ENCODE measurements at regions of chr2 and their contacts with region 1.

Region 1: DNA sequence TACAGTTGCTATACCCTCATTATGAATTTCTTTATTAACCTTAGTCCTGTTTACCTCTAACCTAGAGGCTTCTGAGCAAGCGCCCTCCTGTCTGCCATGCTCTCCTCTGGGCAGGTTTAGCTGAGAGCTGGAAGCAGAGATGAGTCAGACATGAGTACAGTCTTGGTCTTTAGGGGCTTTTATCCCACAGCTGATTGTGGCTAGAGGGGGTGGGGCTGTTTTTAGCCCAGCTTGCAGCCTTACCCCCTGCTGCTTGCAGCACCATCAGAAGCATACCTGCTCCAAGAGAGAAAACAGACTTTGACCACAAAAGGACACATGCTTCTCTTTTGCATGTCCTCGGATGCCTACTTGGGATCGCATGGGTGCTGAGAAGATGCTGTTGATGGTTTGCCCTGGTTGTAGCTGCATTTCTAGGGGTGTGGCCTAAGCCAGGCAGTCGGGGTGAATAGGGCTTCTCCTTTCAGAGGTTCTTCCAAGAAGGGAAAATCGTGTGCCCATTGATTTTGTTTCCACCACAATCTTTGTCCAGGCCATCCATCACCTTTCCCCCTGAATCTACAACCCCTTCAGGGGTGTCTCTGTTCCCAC is 115.0 kb upstream of the LGALSL start:
- DNase-seq: peak; percentile 35 to 72
- H3K4me3 ChIP-seq: no peak overlapping the region
- H3K27ac ChIP-seq: peak overlapping the region; percentile 42; the same call in 1 of the 2 replicates
- H3K4me1 ChIP-seq: peaks cover 43% of the 10 kb centered on the region
- H3K27me3 ChIP-seq: no peaks in the 10 kb centered on the region
- CTCF ChIP-seq: no peak

Region 2: GRCh38 chr2:64283641-64284361 is 55.2 kb before region 1 on chr2:
- CTCF ChIA-PET with region 1: no interaction called
- POLR2A ChIA-PET with region 1: no interaction called
- intact Hi-C with region 1: no loop called
- DNase-seq: no peak
- H3K4me3 ChIP-seq: no peak overlapping the region
- H3K27ac ChIP-seq: no peak overlapping the region
- H3K4me1 ChIP-seq: peaks cover 1% of the 10 kb centered on the region; the same call in 1 of the 2 replicates
- H3K27me3 ChIP-seq: no peaks in the 10 kb centered on the region
- CTCF ChIP-seq: no peak

Region 3: DNA sequence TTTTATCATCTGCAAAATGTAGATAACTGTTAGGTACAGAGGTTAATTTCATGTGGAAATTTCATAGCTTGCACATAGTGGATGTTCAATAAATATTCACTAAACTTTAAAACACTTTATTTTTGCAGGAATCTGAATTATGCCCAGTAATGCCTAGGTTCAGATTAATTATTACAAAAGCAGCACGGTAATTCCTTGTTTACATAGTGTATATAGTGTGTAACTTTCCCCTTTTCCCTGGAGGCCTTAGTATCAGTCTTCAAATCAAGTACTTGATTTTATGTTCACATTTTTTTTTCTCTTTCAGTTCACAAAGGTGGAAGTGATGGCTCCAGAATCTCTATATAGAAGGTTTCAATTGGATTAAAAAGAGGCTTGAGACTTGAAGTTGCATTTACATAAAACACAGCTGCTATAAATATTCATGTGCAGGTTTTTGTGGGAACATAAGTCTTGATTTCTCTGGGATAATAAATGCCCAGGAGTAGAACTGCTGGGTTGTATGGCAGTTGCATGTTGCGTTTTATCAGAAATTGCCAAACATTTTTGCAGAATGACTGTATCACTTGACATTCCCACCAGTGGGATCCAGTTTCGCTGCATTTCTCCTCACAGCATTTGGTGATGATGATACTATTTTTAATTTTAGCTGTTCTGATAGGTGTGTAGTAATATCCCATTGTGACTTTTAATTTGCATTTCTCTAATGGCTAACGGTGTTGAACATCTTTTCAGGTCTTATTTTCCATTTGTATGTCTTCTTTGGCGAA is 87.4 kb after region 1 on chr2:
- CTCF ChIA-PET with region 1: no interaction called
- POLR2A ChIA-PET with region 1: no interaction called
- intact Hi-C with region 1: no loop called
- DNase-seq: peak; percentile 34 to 69
- H3K4me3 ChIP-seq: no peak overlapping the region
- H3K27ac ChIP-seq: peak overlapping the region; percentile 33
- H3K4me1 ChIP-seq: peaks cover 17% of the 10 kb centered on the region
- H3K27me3 ChIP-seq: no peaks in the 10 kb centered on the region
- CTCF ChIP-seq: no peak

Region 4: DNA sequence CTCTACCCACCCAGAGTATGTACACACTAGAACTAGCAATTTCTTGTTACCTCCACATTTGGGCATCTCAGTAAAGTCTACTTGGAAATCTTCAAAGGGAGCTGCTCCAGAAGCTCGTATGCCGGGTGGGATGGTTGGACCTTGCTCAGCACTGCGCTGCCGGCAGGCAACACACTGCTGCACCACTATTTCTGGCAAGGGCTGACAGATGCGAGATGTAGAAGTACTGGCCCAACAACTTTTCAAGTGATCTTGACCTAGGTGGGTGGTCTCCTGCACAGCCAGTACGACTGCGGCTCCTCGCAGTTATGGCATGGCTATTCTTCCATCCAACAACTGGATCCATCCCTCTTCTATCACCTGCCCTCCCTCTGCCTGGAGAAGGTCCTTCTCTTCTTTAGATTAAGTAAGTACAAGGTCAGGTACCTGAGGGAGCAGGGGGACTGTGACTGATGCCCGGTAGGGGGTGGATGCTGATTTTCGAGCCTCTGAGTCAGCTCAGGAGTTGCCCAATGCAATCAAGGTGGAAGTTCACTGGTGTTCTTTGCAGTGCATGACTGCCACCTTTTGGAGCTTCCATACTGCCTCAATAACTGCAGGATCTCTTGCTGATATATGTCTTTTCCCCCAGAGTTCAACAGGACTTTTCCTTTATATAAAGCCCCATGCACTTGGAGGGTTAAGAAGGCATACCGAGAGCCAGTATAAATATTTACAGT is 549.7 kb after region 1 on chr2:
- CTCF ChIA-PET with region 1: no interaction called
- POLR2A ChIA-PET with region 1: no interaction called
- intact Hi-C with region 1: loop called (anchors 2 kb)
- DNase-seq: peak; percentile 80 to 92
- H3K4me3 ChIP-seq: no peak overlapping the region
- H3K27ac ChIP-seq: no peak overlapping the region
- H3K4me1 ChIP-seq: peaks cover 8% of the 10 kb centered on the region
- H3K27me3 ChIP-seq: no peaks in the 10 kb centered on the region
- CTCF ChIP-seq: peak; percentile 79

Measured in PC-9 (cell line).